ENCODE measurements at regions of chr2 and their contacts with region 1.

Region 1: DNA sequence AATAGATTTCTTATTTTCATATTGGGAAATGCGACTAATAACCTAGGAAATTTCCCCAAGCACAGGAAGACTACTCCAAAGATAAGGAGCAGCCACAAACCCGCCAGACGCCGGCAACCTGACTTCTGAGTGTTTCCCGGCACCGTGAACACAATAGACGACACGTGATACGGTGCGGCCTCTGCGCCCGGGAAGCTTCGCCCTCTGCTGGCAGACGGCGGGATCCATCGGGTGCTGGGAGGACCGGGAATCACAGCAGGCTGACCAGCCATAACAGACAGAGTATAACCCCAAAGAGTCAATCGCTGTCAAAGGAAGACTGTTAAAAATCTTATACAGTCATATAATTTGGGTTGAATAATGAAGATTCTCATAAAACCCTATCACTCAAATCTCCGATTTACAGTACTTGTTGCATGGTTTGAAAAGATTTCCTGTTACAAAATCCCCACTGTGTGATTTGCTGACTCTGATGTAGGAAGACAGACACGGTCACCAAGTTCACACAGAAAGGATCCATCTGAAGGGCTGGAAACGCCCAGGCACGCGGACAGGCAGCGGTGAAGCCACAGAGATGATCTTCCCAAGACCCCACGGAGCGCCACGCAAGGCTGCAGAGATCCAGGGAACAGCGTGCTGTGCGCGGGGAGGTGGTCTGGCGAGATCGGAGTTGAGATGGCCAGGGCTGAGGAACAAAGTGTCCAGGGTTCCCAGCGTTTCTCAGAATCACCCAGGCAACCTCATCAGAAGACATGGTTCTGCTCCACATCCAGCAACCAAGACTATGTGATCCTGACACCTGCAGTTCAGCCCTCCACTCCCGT is 73.8 kb downstream of the EIPR1 start:
- DNase-seq: peak; percentile 90 to 98 (median 96)
- H3K4me3 ChIP-seq: peak overlapping the region in 1 of 4 donors; percentile 44
- H3K27ac ChIP-seq: peak overlapping the region; percentile 76 to 99 (median 93)
- H3K4me1 ChIP-seq: peaks cover 5 to 29% of the 10 kb centered on the region in 2 donors
- H3K27me3 ChIP-seq: no peaks in the 10 kb centered on the region
- CTCF ChIP-seq: peak; percentile 93 to 98 (median 96)
- POLR2A ChIP-seq: peak in 1 of 2 donors; percentile 50

Region 2: DNA sequence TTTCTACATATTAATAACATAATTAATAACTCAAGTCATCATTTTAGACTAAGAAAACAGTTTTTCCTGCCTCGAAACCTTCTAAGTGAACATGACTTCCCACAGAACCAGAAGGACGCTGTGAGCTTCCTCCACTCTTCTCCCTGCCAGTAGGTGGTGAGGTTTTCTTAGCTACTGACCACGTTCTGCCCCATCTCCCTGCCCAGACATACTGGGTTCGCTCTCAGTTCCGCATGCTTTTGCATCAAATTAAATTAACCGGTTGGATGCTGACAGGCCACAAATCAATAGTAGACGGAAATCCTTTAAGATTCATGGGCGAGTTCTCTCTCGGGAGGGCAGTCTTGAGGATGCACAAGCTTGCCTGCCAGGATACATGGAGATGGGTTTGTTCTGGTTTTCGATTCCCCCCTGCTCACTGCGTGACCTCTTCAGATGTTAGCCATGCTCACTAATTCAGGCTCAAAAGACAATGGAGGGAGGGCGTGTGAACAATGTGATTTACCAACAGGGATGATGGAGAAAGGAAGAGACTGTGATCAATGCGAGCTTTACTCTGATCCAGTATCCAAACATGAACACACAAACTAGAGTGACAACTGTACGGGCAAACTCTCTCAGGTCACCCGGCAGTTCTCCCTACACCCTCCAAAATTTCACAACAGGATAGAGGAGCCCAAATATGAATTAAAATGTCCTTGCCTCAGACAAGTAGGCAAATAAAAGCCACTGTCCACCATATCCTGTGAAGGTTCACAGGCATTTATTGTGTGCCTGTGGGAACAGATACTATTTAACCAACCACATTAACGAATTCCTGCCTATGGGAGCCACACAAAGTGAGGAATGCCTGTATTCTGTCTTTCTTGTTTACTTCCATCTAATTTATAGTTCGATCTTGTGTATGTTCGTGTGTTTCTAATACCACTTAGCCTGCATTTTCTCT is 301.9 kb before region 1 on chr2:
- intact Hi-C with region 1: loop called in 1 of 2 experiments (anchors 10 kb)
- DNase-seq: peak; percentile 28 to 65 (median 42)
- H3K4me3 ChIP-seq: no peak overlapping the region
- H3K27ac ChIP-seq: no peak overlapping the region
- H3K4me1 ChIP-seq: no peaks in the 10 kb centered on the region
- H3K27me3 ChIP-seq: peaks cover 8% of the 10 kb centered on the region
- CTCF ChIP-seq: peak; percentile 24 to 59 (median 47)
- POLR2A ChIP-seq: no peak

Region 3: DNA sequence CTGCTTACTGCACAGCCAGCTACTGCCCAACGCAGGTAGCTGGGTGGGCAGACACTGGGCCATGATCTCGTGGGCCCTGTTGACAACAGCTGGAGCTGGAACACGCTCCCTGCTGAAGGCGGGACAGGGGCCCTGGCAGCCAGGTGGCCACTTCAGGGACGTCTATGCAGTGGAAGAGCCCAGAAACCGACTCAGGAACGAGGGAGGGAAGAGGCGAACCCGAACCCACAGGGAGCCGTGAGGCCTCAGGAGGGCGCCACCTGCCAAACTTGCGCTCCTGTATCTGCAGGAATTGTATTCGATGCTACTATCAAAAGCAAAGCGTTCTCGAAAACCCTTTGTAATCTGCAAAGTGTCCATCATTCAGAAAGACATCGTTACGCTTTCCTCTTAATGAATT is 124.6 kb before region 1 on chr2:
- intact Hi-C with region 1: no loop called
- DNase-seq: peak in 1 of 7 donors; percentile 31
- H3K4me3 ChIP-seq: no peak overlapping the region
- H3K27ac ChIP-seq: no peak overlapping the region
- H3K4me1 ChIP-seq: no peaks in the 10 kb centered on the region
- H3K27me3 ChIP-seq: no peaks in the 10 kb centered on the region
- CTCF ChIP-seq: peak in 3 of 6 experiments; percentile 10 to 24 (median 14)
- POLR2A ChIP-seq: no peak

Region 4: GRCh38 chr2:3282056-3282998 is 21.5 kb before region 1 on chr2:
- intact Hi-C with region 1: loop called in 1 of 2 experiments (anchors 2 kb)
- DNase-seq: peak; percentile 85 to 95 (median 93)
- H3K4me3 ChIP-seq: no peak overlapping the region
- H3K27ac ChIP-seq: peak overlapping the region; percentile 50 to 91 (median 69)
- H3K4me1 ChIP-seq: peaks cover 0 to 13% of the 10 kb centered on the region in 2 donors
- H3K27me3 ChIP-seq: no peaks in the 10 kb centered on the region
- CTCF ChIP-seq: peak in 1 of 6 experiments; percentile 19
- POLR2A ChIP-seq: no peak

Region 5: GRCh38 chr2:3805201-3805939 is 501.6 kb after region 1 on chr2:
- intact Hi-C with region 1: no loop called
- DNase-seq: peak in 2 of 7 donors; percentile 3 to 15
- H3K4me3 ChIP-seq: no peak overlapping the region
- H3K27ac ChIP-seq: no peak overlapping the region
- H3K4me1 ChIP-seq: no peaks in the 10 kb centered on the region
- H3K27me3 ChIP-seq: no peaks in the 10 kb centered on the region
- CTCF ChIP-seq: peak in 2 of 6 experiments; percentile 11 to 21
- POLR2A ChIP-seq: no peak

Measured in adrenal gland (tissue), 19 donors.